ENCODE measurements at regions of chr20 and their contacts with region 1.

Region 1: DNA sequence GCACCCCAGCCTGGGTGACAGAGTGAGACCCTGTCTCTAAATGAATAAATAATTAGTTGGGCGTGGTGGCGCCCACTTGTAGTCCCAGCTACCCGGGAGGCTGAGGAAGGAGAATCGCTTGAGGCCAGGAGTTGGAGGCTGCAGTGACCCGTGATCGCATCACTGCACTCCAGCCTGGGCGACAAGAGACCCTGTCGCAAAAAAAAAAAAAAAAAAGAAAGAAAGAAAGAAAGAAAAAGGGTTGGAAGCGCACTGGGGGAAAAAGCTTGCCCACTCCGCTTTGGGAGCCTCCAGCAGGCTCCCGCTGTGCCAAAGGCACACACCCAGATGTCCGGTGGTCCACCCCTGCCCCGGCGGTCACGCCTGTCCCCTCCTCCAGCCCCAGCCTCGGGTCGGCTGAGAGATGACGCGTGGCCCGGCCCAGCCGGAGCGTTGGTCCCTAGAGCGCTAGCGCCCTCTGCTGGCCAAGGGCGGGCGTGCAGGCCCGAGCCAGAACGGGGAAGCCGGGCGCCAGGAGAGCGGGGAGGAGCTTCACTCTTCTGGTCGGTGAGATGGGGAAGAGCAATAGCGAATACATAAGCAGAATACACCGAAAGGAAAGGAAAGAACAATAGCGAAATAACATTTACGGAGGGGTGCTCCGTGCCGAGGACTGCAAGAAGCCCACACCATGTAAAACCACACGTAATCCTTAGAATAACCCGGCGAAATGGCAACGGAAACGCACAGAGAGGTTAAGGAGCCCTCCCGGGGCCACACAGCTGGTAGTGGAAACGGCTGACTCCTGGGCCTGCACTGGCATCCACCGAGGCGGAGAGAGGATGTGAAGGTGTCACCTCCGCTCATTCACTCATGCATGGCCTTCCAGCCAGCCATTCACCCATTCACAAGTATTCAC is 41.7 kb downstream of the UBE2V1 start:
- DNase-seq: peak; percentile 38
- H3K4me3 ChIP-seq: peak overlapping the region; percentile 56
- H3K27ac ChIP-seq: no peak overlapping the region
- H3K27me3 ChIP-seq: no peaks in the 10 kb centered on the region
- CTCF ChIP-seq: peak; percentile 98

Region 2: GRCh38 chr20:49936153-49937027 is 134.8 kb before region 1 on chr20 and contains the start of gene RNF114:
- CTCF ChIA-PET with region 1: interaction called, 19 read pairs
- POLR2A ChIA-PET with region 1: no interaction called
- DNase-seq: peak; percentile 67
- H3K4me3 ChIP-seq: peak within 1 kb of the TSS; percentile 96
- H3K27ac ChIP-seq: peak within 1 kb of the TSS; percentile 81
- H3K27me3 ChIP-seq: no peaks in the 10 kb centered on the region
- CTCF ChIP-seq: no peak
- polyA plus RNA-seq, gene RNF114: 69.6 and 87.4 TPM in 2 replicates

Region 3: DNA sequence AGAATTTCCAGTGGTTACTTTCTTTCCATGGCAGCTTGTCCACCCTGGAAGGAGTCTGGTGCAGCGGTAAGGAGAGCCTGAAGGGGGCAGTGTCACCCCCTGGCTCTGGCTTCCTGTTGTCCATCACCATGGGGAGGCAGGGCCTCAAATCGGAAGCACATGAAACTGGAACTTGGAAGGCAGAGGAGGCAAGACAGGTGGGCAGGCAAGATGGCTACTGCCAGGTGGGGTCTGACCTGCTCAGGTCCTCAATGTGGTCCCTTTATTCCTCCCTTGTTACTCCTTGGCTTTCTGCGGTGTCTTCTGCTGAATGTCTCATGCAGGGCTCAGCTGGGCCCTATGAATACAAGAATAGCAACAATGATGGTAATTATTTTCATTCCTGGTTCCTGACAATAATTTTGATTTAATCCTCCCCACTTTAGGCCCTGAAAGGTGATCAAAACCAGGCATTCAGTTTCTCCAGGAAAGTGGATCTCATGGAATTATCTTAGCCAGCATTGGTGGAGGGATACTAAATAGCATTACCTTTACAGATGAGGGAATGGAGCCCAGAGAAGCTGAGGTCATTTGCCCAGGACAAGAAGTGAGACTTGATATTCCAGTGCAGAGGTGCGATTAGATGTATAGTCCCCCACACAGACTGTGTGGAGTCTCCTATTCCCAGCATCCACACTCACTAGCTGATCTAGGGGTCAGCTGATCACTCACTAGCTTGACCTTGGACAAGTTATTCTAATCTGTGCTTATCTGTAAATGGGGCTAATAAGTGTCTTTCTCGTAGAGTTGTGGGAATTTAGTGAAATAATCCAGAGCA is 106.1 kb before region 1 on chr20:
- CTCF ChIA-PET with region 1: interaction called, 23 read pairs
- POLR2A ChIA-PET with region 1: no interaction called
- DNase-seq: no peak
- H3K4me3 ChIP-seq: no peak overlapping the region
- H3K27ac ChIP-seq: no peak overlapping the region
- H3K27me3 ChIP-seq: no peaks in the 10 kb centered on the region
- CTCF ChIP-seq: peak; percentile 58

Region 4: GRCh38 chr20:50005471-50005981 is 65.7 kb before region 1 on chr20:
- CTCF ChIA-PET with region 1: interaction called, 11 read pairs
- POLR2A ChIA-PET with region 1: no interaction called
- DNase-seq: no peak
- H3K4me3 ChIP-seq: no peak overlapping the region
- H3K27ac ChIP-seq: no peak overlapping the region
- H3K27me3 ChIP-seq: no peaks in the 10 kb centered on the region
- CTCF ChIP-seq: no peak

Region 5: DNA sequence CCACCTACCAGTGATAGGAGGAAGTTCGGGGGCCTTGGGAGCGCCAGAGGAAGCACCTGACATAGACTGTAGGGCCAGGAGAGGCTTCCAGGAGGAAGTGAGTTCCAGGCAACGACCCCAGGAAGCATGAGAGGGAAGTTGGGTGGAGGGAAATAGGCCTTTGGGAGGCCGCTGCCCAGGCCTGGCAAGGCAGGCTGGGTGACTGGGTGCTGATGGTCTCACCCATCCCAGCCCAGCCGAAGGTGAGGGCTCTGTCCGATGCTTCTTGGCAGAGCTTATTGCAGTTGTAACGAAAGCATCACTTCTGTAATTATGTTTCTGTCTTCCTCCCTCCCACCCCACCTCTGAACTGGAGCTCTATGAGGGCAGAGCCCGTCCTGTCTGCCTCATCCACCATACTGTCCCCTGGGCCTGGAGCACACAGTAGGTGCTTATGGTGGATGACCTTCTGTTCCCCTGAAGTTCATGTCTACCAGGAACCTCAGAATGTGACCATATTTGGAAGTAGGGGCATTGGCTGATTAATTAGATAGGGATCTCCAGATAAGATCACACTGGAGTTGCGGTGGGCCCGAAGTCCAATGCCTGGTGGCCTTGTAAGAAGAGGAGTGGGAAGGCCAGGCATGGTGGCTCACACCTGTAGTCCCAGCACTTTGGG is 12.4 kb before region 1 on chr20:
- CTCF ChIA-PET with region 1: interaction called, 33 read pairs
- POLR2A ChIA-PET with region 1: interaction called, 3 read pairs
- DNase-seq: no peak
- H3K4me3 ChIP-seq: no peak overlapping the region
- H3K27ac ChIP-seq: no peak overlapping the region
- H3K27me3 ChIP-seq: no peaks in the 10 kb centered on the region
- CTCF ChIP-seq: no peak

Region 6: DNA sequence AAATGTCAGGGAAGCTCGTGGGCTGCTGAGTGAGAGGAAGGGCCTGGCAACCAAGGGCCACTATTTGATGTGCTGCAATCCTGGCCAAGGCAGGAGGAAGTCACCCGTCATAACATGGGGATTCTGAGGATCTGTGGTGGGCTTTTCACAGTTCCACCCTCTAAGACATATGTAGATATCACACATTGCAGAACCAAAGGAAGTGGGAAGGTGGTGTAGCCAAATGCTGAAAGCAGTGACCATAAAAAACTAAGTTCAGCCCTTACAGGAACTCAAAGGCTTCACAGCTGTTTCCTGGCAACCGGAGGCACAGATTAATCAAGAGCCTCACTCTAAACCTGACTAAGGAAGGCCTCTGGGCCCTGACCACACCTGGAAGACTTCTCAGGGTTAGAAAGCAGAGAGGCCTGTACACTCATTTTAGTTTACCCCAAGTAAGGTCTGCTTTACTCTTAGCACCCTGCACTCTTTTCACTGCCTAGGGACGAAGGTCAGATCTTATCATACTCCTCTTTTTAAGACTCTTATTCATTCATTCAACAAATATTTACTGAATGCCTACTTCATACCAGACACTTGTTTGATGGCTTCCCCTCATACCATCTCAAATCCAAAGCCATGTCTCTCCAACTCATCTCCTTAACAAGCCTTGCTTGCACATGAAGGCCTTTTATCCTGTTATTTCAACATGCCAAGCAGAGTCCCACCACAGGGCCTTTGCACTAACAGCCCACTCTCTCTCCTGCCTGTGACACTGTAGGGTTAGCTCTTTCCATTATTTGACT is 39.1 kb after region 1 on chr20:
- CTCF ChIA-PET with region 1: interaction called, 11 read pairs
- POLR2A ChIA-PET with region 1: no interaction called
- DNase-seq: no peak
- H3K4me3 ChIP-seq: peak overlapping the region; percentile 92; the same call in 1 of the 2 replicates
- H3K27ac ChIP-seq: no peak overlapping the region
- H3K27me3 ChIP-seq: no peaks in the 10 kb centered on the region
- CTCF ChIP-seq: no peak

Region 7: DNA sequence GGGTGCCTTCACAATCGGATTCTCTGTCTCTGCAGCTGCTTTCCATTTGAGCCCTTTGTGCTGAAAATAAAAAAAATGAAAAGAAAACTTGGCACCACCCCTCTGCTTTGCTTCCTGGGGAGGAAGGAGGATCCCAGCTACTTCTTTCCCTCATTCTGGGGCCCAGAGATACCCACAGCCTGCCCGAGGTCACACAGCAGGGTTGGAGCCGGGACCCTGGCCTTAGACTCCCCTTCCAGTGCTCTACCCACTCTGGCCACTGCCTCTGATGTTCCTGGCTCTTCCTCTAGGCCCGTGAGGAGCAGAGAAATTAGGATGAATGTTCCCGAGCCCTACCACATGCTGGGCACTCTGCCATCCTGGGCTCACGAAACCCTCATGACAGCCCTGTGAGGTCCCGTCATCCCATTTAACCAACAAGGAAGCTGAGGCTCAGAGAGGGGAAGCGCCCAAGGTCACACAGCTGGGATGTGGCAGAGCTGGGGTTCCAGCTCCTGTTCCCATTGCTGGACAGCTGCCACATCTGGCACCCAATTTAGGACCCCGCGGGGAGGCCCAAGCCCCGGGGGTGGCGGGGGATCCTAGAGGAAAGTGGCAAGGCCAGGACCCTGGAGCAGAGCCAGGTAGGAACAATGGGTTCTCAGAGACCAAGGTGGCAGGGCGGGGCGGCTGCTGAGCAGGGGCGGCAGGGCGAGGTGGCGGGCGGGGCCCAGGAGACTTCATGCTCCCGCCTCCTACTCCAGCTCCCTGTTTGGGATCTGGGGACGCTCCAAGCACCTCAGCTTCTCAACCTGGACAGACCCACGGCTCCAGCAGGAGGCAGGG is 196.0 kb after region 1 on chr20:
- CTCF ChIA-PET with region 1: no interaction called
- POLR2A ChIA-PET with region 1: no interaction called
- DNase-seq: no peak
- H3K4me3 ChIP-seq: no peak overlapping the region
- H3K27ac ChIP-seq: no peak overlapping the region
- H3K27me3 ChIP-seq: no peaks in the 10 kb centered on the region
- CTCF ChIP-seq: no peak

Measured in AG04450 (cell line).